H1 (cell line): ENCODE measurements at regions of chr10 and their contacts with region 1.

Region 1: GRCh38 chr10:69786791-69787190 is 14.9 kb upstream of the COL13A1 start:
- DNase-seq: no peak
- H3K4me3 ChIP-seq: no peak overlapping the region
- H3K27ac ChIP-seq: no peak overlapping the region
- H3K4me1 ChIP-seq: peaks cover 0 to 3% (median 0%) of the 10 kb centered on the region in 4 experiments; a peak in 1 of 7 replicates
- H3K27me3 ChIP-seq: peaks cover 0 to 5% (median 0%) of the 10 kb centered on the region in 4 experiments; a peak in 1 of 7 replicates
- CTCF ChIP-seq: peak in 2 of 3 experiments; percentile 62 to 64; a peak in 3 of 4 replicates
- EP300 ChIP-seq: no peak
- POLR2A ChIP-seq: no peak
- RAD21 ChIP-seq: peak; percentile 82 to 85

Region 2: DNA sequence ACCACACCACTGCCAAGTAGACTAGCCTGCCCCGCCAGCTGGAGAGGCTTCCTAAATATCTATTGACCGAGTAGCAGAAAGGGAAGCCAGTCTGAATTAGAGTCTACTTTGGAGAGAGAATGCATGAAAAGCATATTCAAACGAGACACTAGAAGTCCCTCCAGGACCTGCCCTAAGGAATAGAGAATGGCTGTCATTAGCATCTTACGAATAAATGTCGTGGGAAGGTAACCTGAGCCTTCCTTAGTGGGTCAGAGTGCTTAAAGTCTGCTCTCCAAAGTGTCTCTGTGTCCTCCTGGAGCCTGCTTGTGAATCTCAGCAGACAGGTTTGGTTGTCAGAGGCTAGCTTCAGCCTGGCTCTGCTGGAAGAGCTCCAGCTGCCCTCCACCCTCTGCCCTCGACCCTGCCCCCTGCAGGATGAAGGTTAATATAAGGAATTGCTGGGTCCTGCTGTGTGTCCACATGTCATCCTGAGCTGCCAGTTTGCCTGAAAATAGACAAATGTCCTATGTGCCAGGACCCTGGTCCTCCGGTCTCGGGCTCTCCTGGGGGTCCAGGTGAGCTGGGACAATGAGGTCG is 123.3 kb before region 1 on chr10:
- CTCF ChIA-PET with region 1: interaction called, 19 read pairs
- POLR2A ChIA-PET with region 1: no interaction called
- DNase-seq: peak in 1 of 2 experiments; percentile 66
- H3K4me3 ChIP-seq: no peak overlapping the region
- H3K27ac ChIP-seq: no peak overlapping the region
- H3K4me1 ChIP-seq: peaks cover 0 to 8% (median 1%) of the 10 kb centered on the region in 4 experiments; a peak in 3 of 7 replicates
- H3K27me3 ChIP-seq: no peaks in the 10 kb centered on the region; a peak in 1 of 7 replicates
- CTCF ChIP-seq: peak; percentile 61 to 80 (median 74)
- EP300 ChIP-seq: no peak
- POLR2A ChIP-seq: no peak
- RAD21 ChIP-seq: peak; percentile 26 to 41; a peak in 3 of 4 replicates

Region 3: GRCh38 chr10:69839696-69840345 is 53.0 kb after region 1 on chr10:
- CTCF ChIA-PET with region 1: interaction called, 25 read pairs
- POLR2A ChIA-PET with region 1: no interaction called
- DNase-seq: no peak
- H3K4me3 ChIP-seq: no peak overlapping the region
- H3K27ac ChIP-seq: no peak overlapping the region
- H3K4me1 ChIP-seq: peaks cover 8 to 31% (median 21%) of the 10 kb centered on the region in 4 experiments
- H3K27me3 ChIP-seq: peaks cover 0 to 2% (median 0%) of the 10 kb centered on the region in 4 experiments; a peak in 1 of 7 replicates
- CTCF ChIP-seq: no peak
- EP300 ChIP-seq: no peak
- POLR2A ChIP-seq: no peak
- RAD21 ChIP-seq: no peak

Region 4: GRCh38 chr10:69866688-69867461 is 80.1 kb after region 1 on chr10:
- CTCF ChIA-PET with region 1: interaction called, 42 read pairs
- POLR2A ChIA-PET with region 1: no interaction called
- DNase-seq: peak in 1 of 2 experiments; percentile 73
- H3K4me3 ChIP-seq: peak overlapping the region in 1 of 4 experiments; percentile 19; a peak in 1 of 8 replicates
- H3K27ac ChIP-seq: peak overlapping the region; percentile 58; the same call in 1 of the 2 replicates
- H3K4me1 ChIP-seq: peaks cover 13 to 57% (median 40%) of the 10 kb centered on the region in 4 experiments
- H3K27me3 ChIP-seq: no peaks in the 10 kb centered on the region; a peak in 1 of 7 replicates
- CTCF ChIP-seq: no peak
- EP300 ChIP-seq: no peak
- POLR2A ChIP-seq: peak in 1 of 2 experiments; percentile 11; a peak in 1 of 3 replicates
- RAD21 ChIP-seq: no peak

Region 5: GRCh38 chr10:69936091-69936490 is 149.3 kb after region 1 on chr10:
- CTCF ChIA-PET with region 1: interaction called, 14 read pairs
- POLR2A ChIA-PET with region 1: no interaction called
- DNase-seq: no peak
- H3K4me3 ChIP-seq: no peak overlapping the region
- H3K27ac ChIP-seq: no peak overlapping the region
- H3K4me1 ChIP-seq: no peaks in the 10 kb centered on the region
- H3K27me3 ChIP-seq: no peaks in the 10 kb centered on the region
- CTCF ChIP-seq: peak; percentile 60 to 70 (median 67)
- EP300 ChIP-seq: no peak
- POLR2A ChIP-seq: no peak
- RAD21 ChIP-seq: peak; percentile 62 to 75

Region 6: DNA sequence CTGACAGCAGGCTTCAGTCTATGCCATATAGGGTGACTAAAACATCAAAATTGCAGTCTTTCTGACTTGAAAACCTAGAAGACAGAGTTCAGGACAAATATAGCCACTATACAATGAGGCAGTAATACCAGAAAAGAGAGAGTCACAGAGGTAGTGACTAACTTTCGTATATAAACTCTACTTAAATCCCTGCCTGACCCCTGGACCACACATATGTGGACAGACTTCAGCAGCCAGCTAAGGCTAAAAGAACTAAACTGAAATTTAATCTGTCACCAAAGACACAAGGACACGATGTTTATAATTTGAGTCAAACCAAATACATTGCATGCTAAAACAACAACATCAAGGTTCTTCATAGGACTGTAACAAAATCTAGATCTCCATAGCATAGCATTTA is 201.3 kb after region 1 on chr10:
- CTCF ChIA-PET with region 1: no interaction called
- POLR2A ChIA-PET with region 1: no interaction called
- DNase-seq: no peak
- H3K4me3 ChIP-seq: no peak overlapping the region
- H3K27ac ChIP-seq: no peak overlapping the region
- H3K4me1 ChIP-seq: no peaks in the 10 kb centered on the region
- H3K27me3 ChIP-seq: peaks cover 0 to 2% (median 0%) of the 10 kb centered on the region in 4 experiments; a peak in 1 of 7 replicates
- CTCF ChIP-seq: no peak
- EP300 ChIP-seq: no peak
- POLR2A ChIP-seq: no peak
- RAD21 ChIP-seq: no peak